ENCODE measurements at regions of chrX and their contacts with region 1.

Region 1: DNA sequence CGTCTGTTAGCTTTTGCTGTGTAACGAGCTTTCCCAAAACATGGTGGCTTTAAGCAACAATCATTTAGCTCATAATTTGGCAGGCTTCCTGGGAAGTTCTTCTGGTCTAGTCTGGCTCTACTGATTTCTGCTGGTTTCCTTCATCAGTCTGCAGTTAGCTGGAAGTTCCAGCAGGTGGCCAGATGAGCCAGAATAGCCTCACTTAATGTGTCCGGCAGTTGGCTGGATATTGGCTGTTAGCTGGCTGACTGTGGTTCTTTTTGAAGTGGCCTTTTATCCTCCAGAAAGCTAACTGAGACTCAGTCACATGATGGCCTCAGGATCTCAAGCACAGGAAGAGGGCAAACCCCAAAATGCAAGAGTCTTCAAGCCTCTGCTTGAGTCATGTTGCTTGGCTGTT is 34.9 kb downstream of the FTHL17 start:
- DNase-seq: no peak
- ATAC-seq: peak; percentile 85
- H3K4me3 ChIP-seq: no peak overlapping the region
- H3K27ac ChIP-seq: no peak overlapping the region
- H3K4me1 ChIP-seq: no peaks in the 10 kb centered on the region
- H3K27me3 ChIP-seq: no peaks in the 10 kb centered on the region
- CTCF ChIP-seq: peak; percentile 76 to 81 (median 79); a peak in 5 of 6 replicates
- EP300 ChIP-seq: no peak
- POLR2A ChIP-seq: no peak
- RAD21 ChIP-seq: peak; percentile 78

Region 2: DNA sequence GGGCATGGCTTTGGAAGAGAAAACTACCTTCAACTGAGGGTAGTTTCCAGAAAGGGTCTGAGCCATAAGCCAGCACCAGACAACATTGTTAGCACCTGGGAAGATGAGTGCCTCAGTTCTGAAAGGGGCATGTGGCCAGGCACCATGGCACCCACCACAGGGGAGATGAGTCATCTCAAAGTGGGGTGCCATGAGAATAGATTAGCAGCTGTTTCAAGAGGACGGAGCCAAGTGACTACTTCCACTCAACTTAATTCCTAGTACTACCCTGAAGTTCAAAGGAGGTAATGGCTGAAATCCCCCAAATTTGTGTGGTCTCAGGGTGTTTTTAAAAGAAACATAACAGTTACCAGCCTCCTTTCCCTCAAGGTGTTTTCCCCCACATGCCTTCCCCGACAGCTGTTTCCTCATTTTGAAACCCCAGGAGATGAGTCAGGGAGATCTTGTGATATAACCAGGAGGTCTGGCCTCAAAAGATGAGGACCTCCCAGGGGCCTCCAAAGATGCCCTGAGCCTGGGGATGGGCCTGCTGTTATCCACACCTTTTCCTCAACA is 62.7 kb after region 1 on chrX:
- CTCF ChIA-PET with region 1: interaction called, 14 read pairs
- POLR2A ChIA-PET with region 1: no interaction called
- RAD21 ChIA-PET with region 1: interaction called, 7 read pairs
- SMC1A ChIA-PET with region 1: interaction called, 17 read pairs
- in situ Hi-C with region 1: no loop called
- intact Hi-C with region 1: loop called (anchors 1 kb)
- DNase-seq: peak; percentile 77
- ATAC-seq: peak; percentile 93
- H3K4me3 ChIP-seq: no peak overlapping the region
- H3K27ac ChIP-seq: peak overlapping the region; percentile 54
- H3K4me1 ChIP-seq: peaks cover 14% of the 10 kb centered on the region; the same call in 1 of the 2 replicates
- H3K27me3 ChIP-seq: no peaks in the 10 kb centered on the region
- CTCF ChIP-seq: no peak
- EP300 ChIP-seq: peak; percentile 64 to 78
- POLR2A ChIP-seq: no peak
- RAD21 ChIP-seq: 0 out of 2 replicates have a peak, but pooled peaks have one; percentile 7

Region 3: GRCh38 chrX:31168551-31168950 is 131.7 kb after region 1 on chrX:
- CTCF ChIA-PET with region 1: interaction called, 12 read pairs
- POLR2A ChIA-PET with region 1: no interaction called
- RAD21 ChIA-PET with region 1: interaction called, 4 read pairs
- SMC1A ChIA-PET with region 1: interaction called, 11 read pairs
- in situ Hi-C with region 1: no loop called
- intact Hi-C with region 1: no loop called
- DNase-seq: peak; percentile 51
- ATAC-seq: peak; percentile 92
- H3K4me3 ChIP-seq: no peak overlapping the region
- H3K27ac ChIP-seq: peak overlapping the region; percentile 20; the same call in 1 of the 2 replicates
- H3K4me1 ChIP-seq: peaks cover 10% of the 10 kb centered on the region
- H3K27me3 ChIP-seq: no peaks in the 10 kb centered on the region
- CTCF ChIP-seq: no peak
- EP300 ChIP-seq: peak; percentile 59 to 77; a peak in 2 of 4 replicates
- POLR2A ChIP-seq: no peak
- RAD21 ChIP-seq: no peak

Region 4: DNA sequence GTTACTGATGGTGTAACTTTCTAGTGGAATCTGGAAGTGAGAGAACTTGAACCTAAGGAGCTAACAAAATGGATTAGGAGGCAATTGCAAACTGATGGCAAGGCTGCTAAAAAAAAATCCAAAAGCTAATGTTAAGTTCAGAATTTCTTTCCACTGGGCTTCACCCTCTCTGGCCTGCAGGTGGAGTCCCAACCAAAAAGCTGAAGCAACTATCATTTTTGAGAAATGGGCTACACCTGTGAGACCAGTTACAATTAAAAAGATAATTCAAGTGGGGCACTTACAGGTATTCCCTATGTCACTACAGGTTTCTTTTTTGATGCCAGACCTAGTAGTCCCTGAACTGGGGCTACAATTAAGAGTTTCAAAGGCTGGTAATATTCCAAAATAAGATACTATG is 177.0 kb after region 1 on chrX:
- CTCF ChIA-PET with region 1: interaction called, 187 read pairs
- POLR2A ChIA-PET with region 1: interaction called, 4 read pairs
- RAD21 ChIA-PET with region 1: interaction called, 127 read pairs
- SMC1A ChIA-PET with region 1: interaction called, 213 read pairs
- in situ Hi-C with region 1: no loop called
- intact Hi-C with region 1: loop called (anchors 1 kb)
- DNase-seq: no peak
- ATAC-seq: peak; percentile 64
- H3K4me3 ChIP-seq: no peak overlapping the region
- H3K27ac ChIP-seq: no peak overlapping the region
- H3K4me1 ChIP-seq: no peaks in the 10 kb centered on the region
- H3K27me3 ChIP-seq: no peaks in the 10 kb centered on the region
- CTCF ChIP-seq: peak; percentile 59 to 62 (median 61)
- EP300 ChIP-seq: no peak
- POLR2A ChIP-seq: no peak
- RAD21 ChIP-seq: peak; percentile 83

Region 5: DNA sequence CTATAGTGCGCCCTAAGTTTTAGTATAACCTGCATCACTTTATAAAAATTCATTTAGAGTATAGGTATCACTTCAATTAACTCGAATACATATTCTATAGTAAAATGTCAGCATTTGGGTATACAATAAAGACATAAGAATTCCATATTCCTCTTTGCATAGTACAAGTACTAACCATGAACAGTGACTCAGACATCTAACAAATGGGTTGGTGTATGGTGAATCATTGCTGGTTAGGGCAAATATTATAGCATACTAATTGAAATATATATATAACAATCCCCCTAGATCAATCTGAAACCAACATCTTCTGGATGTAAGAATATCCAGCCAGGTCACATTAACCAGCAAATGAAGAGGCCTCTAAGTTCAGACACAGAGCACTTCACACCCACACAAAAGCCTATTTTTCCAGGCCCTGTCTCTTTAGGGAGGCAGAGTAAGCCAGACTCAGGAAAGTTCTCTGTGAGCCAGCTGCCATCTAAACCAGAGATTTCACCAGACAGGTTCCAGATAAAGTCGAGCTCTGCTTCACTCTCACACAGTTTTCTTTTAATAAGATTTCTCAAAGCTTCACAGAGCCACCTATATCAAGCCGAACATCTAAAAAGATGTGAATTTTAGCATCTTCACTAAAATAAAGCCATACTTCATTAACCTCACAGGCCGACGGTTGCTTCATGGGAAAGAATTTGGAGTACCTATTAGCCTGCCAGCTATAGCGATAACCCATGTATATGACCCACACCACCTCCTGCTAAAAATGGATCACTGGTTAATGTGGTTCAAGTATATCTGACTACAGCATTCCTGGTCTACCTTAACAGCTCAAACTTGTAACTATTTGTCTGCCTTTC is 234.9 kb after region 1 on chrX:
- CTCF ChIA-PET with region 1: interaction called, 12 read pairs
- POLR2A ChIA-PET with region 1: no interaction called
- RAD21 ChIA-PET with region 1: interaction called, 6 read pairs
- SMC1A ChIA-PET with region 1: interaction called, 7 read pairs
- in situ Hi-C with region 1: no loop called
- intact Hi-C with region 1: no loop called
- DNase-seq: no peak
- ATAC-seq: peak; percentile 59
- H3K4me3 ChIP-seq: no peak overlapping the region
- H3K27ac ChIP-seq: no peak overlapping the region
- H3K4me1 ChIP-seq: no peaks in the 10 kb centered on the region
- H3K27me3 ChIP-seq: 0 out of 4 replicates have a peak, but pooled peaks cover 0 to 2% of the 10 kb centered on the region in 2 experiments
- CTCF ChIP-seq: no peak
- EP300 ChIP-seq: no peak
- POLR2A ChIP-seq: no peak
- RAD21 ChIP-seq: no peak

Region 6: DNA sequence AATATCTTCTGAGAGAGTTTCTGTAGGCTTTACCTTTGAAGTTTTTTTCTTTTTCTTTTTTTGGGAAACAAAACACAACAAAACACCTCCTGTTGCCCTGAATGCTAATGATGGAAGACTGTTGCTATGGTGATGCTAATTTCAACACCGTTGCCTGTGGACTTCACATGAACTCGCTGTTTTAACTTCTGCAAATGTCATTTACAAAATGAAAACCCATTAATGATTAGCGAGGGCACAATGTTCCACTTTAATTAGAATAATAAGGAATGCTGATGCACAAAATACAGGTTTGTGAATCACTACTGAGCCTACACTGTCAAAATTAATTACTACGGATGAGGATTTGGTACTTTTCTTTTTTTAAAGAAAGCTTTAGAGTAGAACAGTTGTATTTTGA is 262.0 kb after region 1 on chrX:
- CTCF ChIA-PET with region 1: interaction called, 153 read pairs
- POLR2A ChIA-PET with region 1: no interaction called
- RAD21 ChIA-PET with region 1: interaction called, 99 read pairs
- SMC1A ChIA-PET with region 1: interaction called, 159 read pairs
- in situ Hi-C with region 1: loop called (anchors 5 kb)
- intact Hi-C with region 1: no loop called
- DNase-seq: no peak
- ATAC-seq: no peak
- H3K4me3 ChIP-seq: no peak overlapping the region
- H3K27ac ChIP-seq: no peak overlapping the region
- H3K4me1 ChIP-seq: no peaks in the 10 kb centered on the region
- H3K27me3 ChIP-seq: no peaks in the 10 kb centered on the region; a peak in 1 of 4 replicates
- CTCF ChIP-seq: no peak
- EP300 ChIP-seq: no peak
- POLR2A ChIP-seq: no peak
- RAD21 ChIP-seq: no peak